Activated CD8-positive, alpha-beta T cell treated with anti-CD3 and anti-CD28 coated beads for 36 hours (primary cell): ENCODE measurements at regions of chr6 and their contacts with region 1.

Region 1: DNA sequence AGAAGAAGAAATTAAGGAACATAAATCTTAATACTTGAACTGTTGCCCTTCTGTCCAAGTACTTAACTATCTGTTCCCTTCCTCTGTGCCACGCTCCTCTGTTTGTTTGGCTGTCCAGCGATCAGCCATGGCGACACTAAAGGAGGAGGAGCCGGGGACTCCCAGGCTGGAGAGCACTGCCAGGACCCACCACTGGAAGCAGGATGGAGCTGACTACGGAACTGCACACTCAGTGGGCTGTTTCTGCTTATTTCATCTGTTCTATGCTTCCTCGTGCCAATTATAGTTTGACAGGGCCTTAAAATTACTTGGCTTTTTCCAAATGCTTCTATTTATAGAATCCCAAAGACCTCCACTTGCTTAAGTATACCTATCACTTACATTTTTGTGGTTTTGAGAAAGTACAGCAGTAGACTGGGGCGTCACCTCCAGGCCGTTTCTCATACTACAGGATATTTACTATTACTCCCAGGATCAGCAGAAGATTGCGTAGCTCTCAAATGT is 17.1 kb downstream of the IRF4 start:
- DNase-seq: no peak
- ATAC-seq: no peak
- H3K4me3 Mint-ChIP-seq: no peak overlapping the region
- H3K27ac Mint-ChIP-seq: peak overlapping the region; percentile 77
- H3K4me1 Mint-ChIP-seq: peaks cover 64% of the 10 kb centered on the region
- H3K27me3 Mint-ChIP-seq: no peaks in the 10 kb centered on the region
- CTCF ChIP-seq: peak; percentile 41

Region 2: GRCh38 chr6:356828-357251 is 51.8 kb before region 1 on chr6:
- CTCF ChIA-PET with region 1: no interaction called
- POLR2A ChIA-PET with region 1: no interaction called
- intact Hi-C with region 1: no loop called
- DNase-seq: peak; percentile 70
- ATAC-seq: peak; percentile 92
- H3K4me3 Mint-ChIP-seq: no peak overlapping the region
- H3K27ac Mint-ChIP-seq: peak overlapping the region; percentile 82
- H3K4me1 Mint-ChIP-seq: peaks cover 13% of the 10 kb centered on the region
- H3K27me3 Mint-ChIP-seq: no peaks in the 10 kb centered on the region
- CTCF ChIP-seq: no peak

Region 3: GRCh38 chr6:422433-423054 is 13.9 kb after region 1 on chr6:
- CTCF ChIA-PET with region 1: interaction called, 5 read pairs
- POLR2A ChIA-PET with region 1: interaction called, 888 read pairs
- intact Hi-C with region 1: no loop called
- DNase-seq: peak; percentile 89
- ATAC-seq: peak; percentile 97
- H3K4me3 Mint-ChIP-seq: no peak overlapping the region
- H3K27ac Mint-ChIP-seq: peak overlapping the region; percentile 42
- H3K4me1 Mint-ChIP-seq: peaks cover 25% of the 10 kb centered on the region
- H3K27me3 Mint-ChIP-seq: no peaks in the 10 kb centered on the region
- CTCF ChIP-seq: no peak

Region 4: GRCh38 chr6:453152-453551 is 44.5 kb after region 1 on chr6:
- CTCF ChIA-PET with region 1: no interaction called
- POLR2A ChIA-PET with region 1: interaction called, 630 read pairs
- intact Hi-C with region 1: loop called (anchors 5 kb)
- DNase-seq: no peak
- ATAC-seq: no peak
- H3K4me3 Mint-ChIP-seq: no peak overlapping the region
- H3K27ac Mint-ChIP-seq: no peak overlapping the region
- H3K4me1 Mint-ChIP-seq: peaks cover 32% of the 10 kb centered on the region
- H3K27me3 Mint-ChIP-seq: no peaks in the 10 kb centered on the region
- CTCF ChIP-seq: no peak